Naive thymus-derived CD4-positive, alpha-beta T cell (primary cell): ENCODE measurements at regions of chr4 and their contacts with region 1.

Region 1: DNA sequence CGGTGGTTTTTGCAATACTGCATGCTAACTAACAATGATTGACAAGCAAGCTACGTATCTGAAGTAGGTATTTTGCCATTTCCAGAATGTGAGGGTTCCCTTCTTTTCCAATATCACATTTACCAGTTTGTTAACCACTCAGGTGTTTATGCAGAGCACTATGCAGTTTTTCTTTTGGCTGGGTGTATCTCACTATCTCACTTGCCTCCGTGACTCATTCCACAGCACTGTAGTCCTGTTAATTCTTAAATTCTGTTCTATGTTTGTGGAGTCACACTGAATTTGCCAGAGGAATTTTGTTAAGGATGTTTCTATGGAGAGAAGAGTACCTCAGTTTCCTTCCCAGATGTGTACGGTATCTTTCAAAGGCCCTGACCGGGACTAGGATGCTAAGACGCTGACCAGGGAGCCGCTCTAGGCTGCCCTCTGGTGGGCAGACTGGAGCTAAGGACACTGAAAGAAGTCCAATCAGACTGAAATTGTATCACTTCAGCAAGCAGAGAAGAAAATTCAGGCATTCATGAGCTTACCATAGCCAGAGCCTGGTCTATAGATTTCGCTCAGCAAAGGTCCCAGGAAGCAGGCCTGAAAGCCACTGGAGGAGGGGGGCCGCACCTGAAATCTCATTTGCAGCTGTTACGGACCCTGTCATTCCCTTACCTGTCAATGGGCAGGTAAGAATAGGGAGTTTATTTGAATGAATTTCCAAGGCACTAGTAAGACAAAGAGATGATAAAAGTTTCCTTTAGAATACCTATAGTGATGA is 388.4 kb upstream of the SPOCK3 start:
- DNase-seq: peak in 2 of 9 donors; percentile 4 to 48
- ATAC-seq: no peak
- H3K4me3 ChIP-seq: no peak overlapping the region
- H3K4me3 Mint-ChIP-seq: no peak overlapping the region
- H3K27ac ChIP-seq: no peak overlapping the region
- H3K27ac Mint-ChIP-seq: no peak overlapping the region
- H3K4me1 ChIP-seq: no peaks in the 10 kb centered on the region
- H3K4me1 Mint-ChIP-seq: no peaks in the 10 kb centered on the region
- H3K27me3 ChIP-seq: no peaks in the 10 kb centered on the region
- H3K27me3 Mint-ChIP-seq: no peaks in the 10 kb centered on the region

Region 2: GRCh38 chr4:167021545-167022155 is 601.0 kb before region 1 on chr4:
- CTCF ChIA-PET with region 1: no interaction called
- POLR2A ChIA-PET with region 1: no interaction called
- intact Hi-C with region 1: loop called in 1 of 2 experiments (anchors 1 kb)
- DNase-seq: peak in 8 of 9 donors; percentile 5 to 48 (median 18)
- ATAC-seq: peak; percentile 59
- H3K4me3 ChIP-seq: no peak overlapping the region
- H3K4me3 Mint-ChIP-seq: no peak overlapping the region
- H3K27ac ChIP-seq: no peak overlapping the region
- H3K27ac Mint-ChIP-seq: no peak overlapping the region
- H3K4me1 ChIP-seq: no peaks in the 10 kb centered on the region
- H3K4me1 Mint-ChIP-seq: no peaks in the 10 kb centered on the region
- H3K27me3 ChIP-seq: no peaks in the 10 kb centered on the region
- H3K27me3 Mint-ChIP-seq: no peaks in the 10 kb centered on the region

Region 3: GRCh38 chr4:168076989-168077725 is 454.5 kb after region 1 on chr4:
- CTCF ChIA-PET with region 1: no interaction called
- POLR2A ChIA-PET with region 1: no interaction called
- intact Hi-C with region 1: loop called in 1 of 2 experiments (anchors 5 kb)
- DNase-seq: peak in 3 of 9 donors; percentile 9 to 32 (median 13)
- ATAC-seq: no peak
- H3K4me3 ChIP-seq: no peak overlapping the region
- H3K4me3 Mint-ChIP-seq: no peak overlapping the region
- H3K27ac ChIP-seq: no peak overlapping the region
- H3K27ac Mint-ChIP-seq: no peak overlapping the region
- H3K4me1 ChIP-seq: no peaks in the 10 kb centered on the region
- H3K4me1 Mint-ChIP-seq: no peaks in the 10 kb centered on the region
- H3K27me3 ChIP-seq: no peaks in the 10 kb centered on the region
- H3K27me3 Mint-ChIP-seq: peaks cover 0 to 7% (median under 1%) of the 10 kb centered on the region in 5 donors